Caco-2 (cell line): ENCODE measurements at regions of chr17 and their contacts with region 1.

Region 1: GRCh38 chr17:33779225-33779591 is 475.9 kb upstream of the CCL2 start:
- DNase-seq: peak; percentile 53 to 55
- H3K4me3 ChIP-seq: no peak overlapping the region
- H3K4me3 Mint-ChIP-seq: no peak overlapping the region
- H3K27ac Mint-ChIP-seq: no peak overlapping the region
- H3K4me1 ChIP-seq: no peaks in the 10 kb centered on the region
- H3K4me1 Mint-ChIP-seq: no peaks in the 10 kb centered on the region
- H3K27me3 ChIP-seq: no peaks in the 10 kb centered on the region; the same call in none of the 2 replicates
- H3K27me3 Mint-ChIP-seq: peaks cover 18% of the 10 kb centered on the region
- CTCF ChIP-seq: peak; percentile 90 to 95

Region 2: GRCh38 chr17:33949100-33949499 is 169.9 kb after region 1 on chr17:
- CTCF ChIA-PET with region 1: no interaction called
- POLR2A ChIA-PET with region 1: no interaction called
- intact Hi-C with region 1: loop called (anchors 1 kb)
- DNase-seq: peak in 1 of 2 experiments; percentile 45
- H3K4me3 ChIP-seq: no peak overlapping the region
- H3K4me3 Mint-ChIP-seq: no peak overlapping the region
- H3K27ac Mint-ChIP-seq: no peak overlapping the region
- H3K4me1 ChIP-seq: no peaks in the 10 kb centered on the region
- H3K4me1 Mint-ChIP-seq: no peaks in the 10 kb centered on the region
- H3K27me3 ChIP-seq: no peaks in the 10 kb centered on the region
- H3K27me3 Mint-ChIP-seq: peaks cover 20% of the 10 kb centered on the region
- CTCF ChIP-seq: peak; percentile 51 to 62